GM18951 (cell line): ENCODE measurements at regions of chr10 and their contacts with region 1.

Region 1: DNA sequence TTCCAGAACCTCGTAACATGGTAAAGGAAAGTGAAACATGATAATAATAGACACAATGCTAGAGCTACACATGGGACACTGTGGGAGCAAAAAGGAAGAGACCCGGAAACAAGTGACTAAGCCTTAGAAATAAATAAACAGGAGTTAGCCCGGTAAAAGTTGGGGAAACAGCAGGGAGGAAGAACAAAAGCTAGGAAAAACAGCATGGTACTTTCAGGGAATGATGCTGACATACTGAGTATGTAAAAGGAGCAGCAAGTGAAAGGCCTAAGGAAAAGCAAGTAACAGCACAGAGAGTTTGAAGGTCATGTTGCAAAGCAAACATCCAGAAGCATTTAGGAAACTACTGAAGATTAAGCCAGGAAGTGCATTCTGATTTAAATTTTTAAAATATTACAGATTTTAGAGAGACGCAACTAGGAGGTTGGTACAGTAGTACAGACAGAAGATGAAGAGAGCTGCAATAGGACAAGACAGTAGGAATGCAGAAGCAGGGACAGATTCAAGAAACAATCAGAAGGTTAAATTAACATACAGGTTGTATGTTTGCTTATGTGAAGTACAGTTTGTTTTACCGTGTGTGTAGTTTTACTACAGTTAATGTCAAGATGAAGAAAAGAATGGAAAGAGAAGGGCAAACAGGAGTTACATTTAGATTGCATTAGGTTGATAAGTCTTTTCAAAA is 63.7 kb downstream of the ARHGAP12 start:
- POLR2A ChIP-seq: no peak

Region 2: DNA sequence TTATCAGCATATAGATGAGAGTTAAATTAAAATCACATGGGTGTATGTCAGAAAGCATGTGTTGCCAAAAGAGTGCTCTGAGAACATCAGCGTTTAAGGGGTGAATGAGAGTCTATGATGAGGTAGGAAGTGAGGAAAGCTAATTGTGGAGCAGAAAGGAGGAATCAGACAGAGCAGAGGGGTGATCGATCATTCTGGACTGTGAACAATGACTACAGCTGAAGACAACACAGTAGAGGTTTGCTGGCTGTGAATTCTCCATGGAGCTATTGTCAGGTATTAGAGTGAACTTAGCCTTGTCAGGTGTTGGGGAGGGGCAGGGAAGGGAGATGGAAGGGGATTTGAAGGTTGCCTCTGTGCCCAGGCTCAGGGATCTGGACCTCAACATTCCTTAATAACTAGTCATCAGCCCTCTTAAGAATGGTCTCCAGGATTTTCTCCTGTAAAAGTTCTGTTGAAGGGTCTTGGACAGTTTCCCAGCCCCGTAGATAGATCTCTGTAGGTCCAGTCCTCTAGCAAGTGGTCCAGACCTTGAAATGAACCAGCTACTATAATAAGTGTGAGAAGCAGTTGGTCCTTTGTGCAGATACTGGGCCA is 134.2 kb after region 1 on chr10:
- in situ Hi-C with region 1: loop called (anchors 5 kb)
- POLR2A ChIP-seq: no peak

Region 3: GRCh38 chr10:32244421-32245207 is 379.6 kb after region 1 on chr10:
- in situ Hi-C with region 1: no loop called
- POLR2A ChIP-seq: no peak